HEK293 (cell line): ENCODE measurements at regions of chr2 and their contacts with region 1.

Region 1: DNA sequence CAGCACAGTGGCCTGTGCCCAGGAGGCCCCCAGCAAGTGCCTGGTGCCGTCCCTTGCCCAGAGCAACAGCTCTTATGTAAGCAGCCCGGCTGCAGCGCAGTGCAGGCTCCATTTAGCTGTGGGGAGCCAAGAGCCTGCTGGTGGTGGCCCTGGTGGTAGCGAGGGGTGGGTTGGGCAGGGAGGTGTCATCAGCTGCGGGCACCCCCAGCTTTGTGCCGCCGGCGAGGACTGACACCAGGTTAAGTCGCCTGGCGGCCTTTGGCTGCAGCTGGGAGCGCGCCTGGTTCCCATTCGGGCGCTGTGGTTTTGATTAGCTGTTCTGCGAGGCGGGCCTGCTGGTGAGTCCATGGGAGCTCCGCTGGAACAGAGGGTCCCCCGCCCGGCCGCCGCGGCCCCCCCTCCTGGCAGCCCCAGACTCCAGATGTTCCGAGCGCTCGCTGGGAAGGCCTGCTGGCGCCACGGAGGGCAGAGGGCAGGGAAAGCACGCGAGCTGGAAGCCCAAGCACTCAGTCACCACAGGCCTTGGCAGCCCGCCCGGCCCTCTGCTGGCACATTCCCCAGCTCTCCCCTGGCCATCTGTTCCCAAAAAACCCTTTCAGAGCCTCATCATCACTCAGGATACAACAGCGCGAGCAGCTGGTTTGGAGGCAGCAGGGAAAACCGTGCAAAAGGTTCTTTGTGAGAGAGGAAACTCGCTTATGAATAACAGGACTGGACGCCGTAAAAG is 18.4 kb downstream of the ATOH8 start:
- H3K4me3 ChIP-seq: no peak overlapping the region
- H3K27ac ChIP-seq: peak overlapping the region; percentile 80
- H3K4me1 ChIP-seq: peaks cover 41% of the 10 kb centered on the region
- CTCF ChIP-seq: peak; percentile 91

Region 2: DNA sequence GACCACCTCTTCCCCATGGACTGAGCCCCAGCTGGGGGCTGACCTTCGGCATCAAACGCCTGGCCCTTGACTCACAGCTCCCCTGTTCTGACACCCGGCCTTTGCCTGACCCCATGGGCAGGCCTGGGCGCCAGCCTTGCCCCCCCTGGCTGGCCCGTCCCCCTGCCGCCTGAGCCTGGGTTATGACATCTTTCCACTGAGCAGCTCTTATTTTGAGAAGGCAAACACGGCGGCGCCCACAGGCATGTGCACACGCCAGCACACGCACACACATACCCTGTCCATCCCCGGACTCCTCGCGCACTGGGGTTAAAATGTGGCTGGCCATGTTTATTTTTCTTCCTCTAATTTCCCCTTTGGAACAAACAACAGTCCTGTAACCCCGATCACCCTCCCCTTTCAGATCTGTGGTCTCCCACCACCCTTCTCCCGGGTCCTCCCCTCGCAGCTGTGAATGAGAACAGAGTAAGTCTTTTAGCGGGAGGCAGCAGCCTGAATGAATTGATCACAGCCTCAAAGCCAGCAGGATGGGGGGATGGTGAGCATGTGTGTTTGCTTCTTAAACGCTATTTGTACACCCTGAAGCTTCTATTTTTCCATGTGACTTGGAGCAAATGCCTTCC is 30.2 kb before region 1 on chr2:
- CTCF ChIA-PET with region 1: interaction called, 6 read pairs
- POLR2A ChIA-PET with region 1: interaction called, 11 read pairs
- H3K4me3 ChIP-seq: no peak overlapping the region
- H3K27ac ChIP-seq: peak overlapping the region; percentile 17; the same call in 1 of the 2 replicates
- H3K4me1 ChIP-seq: peaks cover 8% of the 10 kb centered on the region
- CTCF ChIP-seq: no peak

Region 3: GRCh38 chr2:85758361-85759256 is 13.6 kb before region 1 on chr2:
- CTCF ChIA-PET with region 1: interaction called, 105 read pairs
- POLR2A ChIA-PET with region 1: interaction called, 14 read pairs
- H3K4me3 ChIP-seq: no peak overlapping the region
- H3K27ac ChIP-seq: no peak overlapping the region
- H3K4me1 ChIP-seq: peaks cover 12% of the 10 kb centered on the region
- CTCF ChIP-seq: no peak